WTC11 (cell line): ENCODE measurements at regions of chr13 and their contacts with region 1.

Region 1: GRCh38 chr13:110340812-110341444 is 33.8 kb downstream of the COL4A2 start:
- DNase-seq: no peak
- ATAC-seq: peak; percentile 41
- H3K4me3 Mint-ChIP-seq: no peak overlapping the region
- H3K27ac Mint-ChIP-seq: peak overlapping the region; percentile 78
- H3K4me1 Mint-ChIP-seq: peaks cover 38% of the 10 kb centered on the region
- H3K27me3 Mint-ChIP-seq: no peaks in the 10 kb centered on the region
- CTCF ChIP-seq: no peak

Region 2: DNA sequence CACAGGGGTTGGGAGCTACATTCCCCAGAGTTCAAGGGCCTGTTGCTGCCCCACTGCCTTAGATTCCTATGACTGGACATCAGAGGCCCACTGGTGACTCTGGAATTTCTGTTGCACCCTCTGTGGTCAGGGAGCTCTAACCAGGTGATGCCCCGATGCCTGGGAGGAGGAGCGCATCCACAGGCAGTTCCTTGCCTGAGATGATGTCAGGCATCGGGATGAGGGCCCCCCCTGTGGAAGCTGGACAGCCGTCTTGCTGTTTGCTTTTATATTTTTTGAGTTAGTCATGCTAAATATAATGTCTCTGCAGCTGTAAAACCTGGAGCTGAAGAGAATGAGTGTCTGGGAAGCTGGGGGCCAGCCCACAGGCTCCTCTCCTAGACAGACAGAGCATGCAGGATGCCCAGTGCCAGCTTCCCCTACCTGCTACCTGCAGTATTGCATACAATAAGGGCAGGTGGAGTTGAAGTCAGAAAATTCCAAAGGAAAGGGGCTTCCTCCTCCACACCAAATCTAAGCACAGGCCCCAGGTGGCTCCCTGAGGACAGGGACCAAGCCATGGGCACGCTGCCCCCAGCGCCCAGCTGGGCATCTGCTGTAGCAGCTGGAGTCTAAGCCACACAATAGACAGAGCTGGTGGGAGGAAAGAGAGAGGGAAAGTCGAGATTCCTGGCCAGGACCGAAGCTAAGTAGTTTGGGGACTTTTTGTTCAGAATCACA is 17.6 kb before region 1 on chr13:
- CTCF ChIA-PET with region 1: interaction called, 10 read pairs
- POLR2A ChIA-PET with region 1: interaction called, 3 read pairs
- DNase-seq: no peak
- ATAC-seq: peak; percentile 54
- H3K4me3 Mint-ChIP-seq: no peak overlapping the region
- H3K27ac Mint-ChIP-seq: 0 out of 2 replicates have a peak overlapping the region, but pooled peaks have one; percentile 11
- H3K4me1 Mint-ChIP-seq: peaks cover 64% of the 10 kb centered on the region
- H3K27me3 Mint-ChIP-seq: no peaks in the 10 kb centered on the region
- CTCF ChIP-seq: 0 out of 2 replicates have a peak, but pooled peaks have one; percentile 12

Region 3: DNA sequence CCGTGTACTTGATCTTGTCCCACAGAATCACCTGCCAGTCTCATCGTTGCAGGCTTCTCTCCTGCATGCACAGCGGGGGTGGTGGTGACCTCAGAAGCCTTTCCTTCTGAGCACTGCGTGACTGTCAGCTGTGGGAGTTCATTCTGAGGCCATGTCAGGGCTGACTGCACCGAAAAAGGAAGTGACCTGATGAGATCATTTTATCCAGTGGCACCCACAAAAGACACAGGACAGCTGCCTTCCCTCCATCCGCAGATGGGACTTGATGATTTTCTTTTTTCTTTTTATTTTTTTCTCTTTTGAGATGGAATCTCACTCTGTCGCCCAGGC is 130.9 kb after region 1 on chr13:
- CTCF ChIA-PET with region 1: no interaction called
- POLR2A ChIA-PET with region 1: no interaction called
- DNase-seq: no peak
- ATAC-seq: no peak
- H3K4me3 Mint-ChIP-seq: no peak overlapping the region
- H3K27ac Mint-ChIP-seq: no peak overlapping the region
- H3K4me1 Mint-ChIP-seq: peaks cover 6% of the 10 kb centered on the region
- H3K27me3 Mint-ChIP-seq: no peaks in the 10 kb centered on the region
- CTCF ChIP-seq: no peak